ENCODE measurements at regions of chr2 and their contacts with region 1.

Region 1: GRCh38 chr2:136052369-136053362 is 65.3 kb downstream of the CXCR4 start:
- DNase-seq: no peak
- ATAC-seq: no peak
- H3K4me3 Mint-ChIP-seq: peak overlapping the region; percentile 63
- H3K27ac Mint-ChIP-seq: peak overlapping the region; percentile 94
- H3K4me1 Mint-ChIP-seq: peaks cover 78% of the 10 kb centered on the region
- H3K27me3 Mint-ChIP-seq: no peaks in the 10 kb centered on the region

Region 2: GRCh38 chr2:136008205-136008865 is 44.3 kb before region 1 on chr2:
- POLR2A ChIA-PET with region 1: interaction called, 18 read pairs
- DNase-seq: peak; percentile 72
- ATAC-seq: peak; percentile 95
- H3K4me3 Mint-ChIP-seq: peak overlapping the region; percentile 68
- H3K27ac Mint-ChIP-seq: peak overlapping the region; percentile 92
- H3K4me1 Mint-ChIP-seq: peaks cover 39% of the 10 kb centered on the region
- H3K27me3 Mint-ChIP-seq: no peaks in the 10 kb centered on the region

Region 3: DNA sequence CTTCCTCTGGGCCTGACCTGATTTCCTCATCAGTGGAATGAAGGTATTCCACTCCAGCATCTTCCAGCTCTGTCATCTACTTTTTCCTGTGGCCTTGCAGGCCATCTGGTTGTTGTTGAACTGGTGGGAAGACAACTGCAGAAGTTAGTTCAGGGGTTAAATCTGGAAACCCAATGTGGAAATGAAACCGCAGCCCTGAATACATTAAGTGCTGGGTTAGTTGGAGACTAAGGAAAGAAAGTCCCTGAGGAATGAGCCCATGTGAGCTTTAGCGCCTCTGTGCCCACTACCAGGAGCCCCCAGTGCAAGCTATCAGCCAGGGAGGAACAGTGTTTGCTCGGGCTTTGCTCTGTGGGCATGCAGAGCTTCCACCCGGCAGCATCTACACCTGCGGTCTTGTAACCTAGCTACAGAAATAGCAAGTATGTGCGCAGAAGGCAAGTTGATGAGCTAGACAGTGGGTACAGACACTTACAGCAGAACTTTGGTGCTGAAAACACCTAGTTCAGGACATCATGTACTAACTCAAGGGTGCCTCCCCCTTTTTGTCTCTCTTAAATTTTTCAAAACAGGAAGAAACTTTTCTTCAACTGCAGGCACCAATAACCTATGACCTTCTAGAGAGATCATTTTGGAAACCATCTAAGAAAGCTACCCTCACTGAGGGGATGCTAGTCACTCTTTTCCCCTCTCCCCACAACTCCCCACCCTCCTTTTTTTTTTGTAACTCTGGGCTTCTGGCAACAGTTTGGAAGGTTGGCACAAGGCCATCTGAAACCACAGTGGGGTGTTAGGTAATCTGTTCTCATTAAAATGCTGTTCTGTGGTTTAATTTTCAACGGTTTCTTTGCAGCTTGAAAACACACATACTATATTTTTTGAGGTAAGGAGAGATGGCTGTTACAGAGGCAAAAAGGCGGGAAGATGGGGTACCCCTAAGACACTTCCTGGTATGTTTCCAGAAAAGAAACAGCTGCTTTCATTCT is 83.5 kb after region 1 on chr2:
- POLR2A ChIA-PET with region 1: interaction called, 20 read pairs
- DNase-seq: peak; percentile 56
- ATAC-seq: peak; percentile 76
- H3K4me3 Mint-ChIP-seq: peak overlapping the region; percentile 47
- H3K27ac Mint-ChIP-seq: peak overlapping the region; percentile 89
- H3K4me1 Mint-ChIP-seq: peaks cover 75% of the 10 kb centered on the region
- H3K27me3 Mint-ChIP-seq: peaks cover 7% of the 10 kb centered on the region

Region 4: DNA sequence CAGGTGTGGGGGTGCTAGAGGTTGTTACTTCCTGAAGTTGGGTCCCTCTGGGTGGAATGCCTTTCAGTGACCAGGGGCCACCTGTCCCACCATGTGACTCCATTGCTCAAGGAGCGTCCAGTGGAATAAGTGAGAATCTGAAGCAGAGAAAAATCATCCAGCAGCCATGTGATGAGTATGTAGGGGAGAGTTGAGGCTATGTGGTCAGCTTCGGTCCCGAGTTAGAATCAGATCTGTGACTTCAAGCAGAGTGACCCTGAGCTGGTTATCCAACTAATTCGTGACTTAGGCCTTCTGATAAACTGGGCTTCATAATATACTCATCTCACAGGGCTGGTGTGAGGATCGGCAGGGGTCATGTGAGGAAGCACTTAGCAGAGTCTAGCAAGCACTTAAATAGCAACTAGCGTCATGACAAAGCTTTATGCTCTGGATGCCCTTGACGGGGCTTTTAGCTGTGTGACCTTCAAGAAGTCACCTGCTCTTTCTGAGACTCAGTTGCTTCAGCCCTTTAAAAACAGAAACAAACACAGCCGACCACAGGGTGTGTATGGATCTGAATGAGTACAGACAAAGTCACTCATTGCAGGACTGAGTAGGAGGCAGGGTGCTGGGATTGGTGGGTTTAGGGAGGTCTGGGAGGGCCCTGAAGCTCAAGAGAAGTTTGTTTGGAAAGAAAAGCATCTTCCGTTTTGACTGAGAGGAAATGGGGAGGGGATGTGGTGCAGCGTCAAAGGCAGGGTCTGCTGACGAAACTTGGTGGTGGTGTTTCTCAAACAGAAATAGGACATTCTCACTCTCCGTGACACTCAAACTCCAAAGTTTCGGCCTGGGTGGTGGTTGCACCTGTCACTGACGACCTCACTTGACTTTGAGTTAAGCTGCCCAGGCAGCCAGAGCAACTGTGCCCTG is 329.3 kb after region 1 on chr2:
- POLR2A ChIA-PET with region 1: interaction called, 11 read pairs
- DNase-seq: peak; percentile 68
- ATAC-seq: peak; percentile 83
- H3K4me3 Mint-ChIP-seq: peak overlapping the region; percentile 73
- H3K27ac Mint-ChIP-seq: peak overlapping the region; percentile 96
- H3K4me1 Mint-ChIP-seq: peaks cover 57% of the 10 kb centered on the region
- H3K27me3 Mint-ChIP-seq: no peaks in the 10 kb centered on the region